B cell (primary cell): ENCODE measurements at regions of chr6 and their contacts with region 1.

Region 1: DNA sequence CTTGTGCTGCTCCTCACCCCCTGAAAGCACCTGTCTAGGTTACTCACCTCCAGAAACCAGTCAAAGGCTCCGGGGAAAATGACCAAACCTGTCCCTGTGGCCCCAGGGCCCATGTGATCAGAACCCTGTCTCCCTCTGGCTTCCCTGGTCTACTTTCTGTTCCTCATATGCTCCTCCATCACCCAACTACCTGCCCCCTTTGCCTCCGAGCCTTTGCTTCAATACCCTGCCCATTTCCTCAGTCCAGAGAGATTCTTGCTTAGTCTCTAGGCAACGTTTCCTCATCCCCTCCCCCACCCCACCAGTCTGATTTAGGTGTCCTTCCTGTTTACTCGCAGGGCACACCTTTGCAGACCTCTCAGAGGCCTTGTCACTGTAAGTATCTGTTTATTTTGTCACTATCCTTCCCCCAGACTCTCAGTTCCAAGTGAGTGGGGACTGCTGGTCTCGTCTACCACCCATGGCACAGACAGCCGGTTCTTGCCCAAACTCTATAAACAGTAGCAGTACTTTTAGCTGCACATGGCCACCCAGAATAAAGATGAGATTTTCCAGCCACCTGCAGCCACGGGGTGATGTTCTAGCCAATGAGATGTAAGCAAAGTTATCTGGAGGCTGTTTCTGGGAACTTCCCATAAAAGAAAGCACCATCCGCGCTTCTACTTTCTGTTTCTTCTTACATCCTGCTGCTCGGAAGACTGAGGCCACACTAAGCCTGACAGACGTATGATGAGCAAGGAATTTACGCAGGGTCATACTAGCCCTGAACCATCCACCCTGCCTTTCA is 13.3 kb downstream of the ELOVL5 start:
- DNase-seq: peak; percentile 93
- ATAC-seq: peak; percentile 88
- H3K4me3 ChIP-seq: peak overlapping the region; percentile 38 to 79 (median 58)
- H3K4me3 Mint-ChIP-seq: peak overlapping the region; percentile 80
- H3K27ac ChIP-seq: peak overlapping the region; percentile 98
- H3K27ac Mint-ChIP-seq: peak overlapping the region; percentile 97
- H3K4me1 ChIP-seq: peaks cover 81 to 89% of the 10 kb centered on the region in 2 donors
- H3K4me1 Mint-ChIP-seq: peaks cover 88% of the 10 kb centered on the region
- H3K27me3 ChIP-seq: no peaks in the 10 kb centered on the region
- H3K27me3 Mint-ChIP-seq: no peaks in the 10 kb centered on the region
- CTCF ChIP-seq: no peak

Region 2: DNA sequence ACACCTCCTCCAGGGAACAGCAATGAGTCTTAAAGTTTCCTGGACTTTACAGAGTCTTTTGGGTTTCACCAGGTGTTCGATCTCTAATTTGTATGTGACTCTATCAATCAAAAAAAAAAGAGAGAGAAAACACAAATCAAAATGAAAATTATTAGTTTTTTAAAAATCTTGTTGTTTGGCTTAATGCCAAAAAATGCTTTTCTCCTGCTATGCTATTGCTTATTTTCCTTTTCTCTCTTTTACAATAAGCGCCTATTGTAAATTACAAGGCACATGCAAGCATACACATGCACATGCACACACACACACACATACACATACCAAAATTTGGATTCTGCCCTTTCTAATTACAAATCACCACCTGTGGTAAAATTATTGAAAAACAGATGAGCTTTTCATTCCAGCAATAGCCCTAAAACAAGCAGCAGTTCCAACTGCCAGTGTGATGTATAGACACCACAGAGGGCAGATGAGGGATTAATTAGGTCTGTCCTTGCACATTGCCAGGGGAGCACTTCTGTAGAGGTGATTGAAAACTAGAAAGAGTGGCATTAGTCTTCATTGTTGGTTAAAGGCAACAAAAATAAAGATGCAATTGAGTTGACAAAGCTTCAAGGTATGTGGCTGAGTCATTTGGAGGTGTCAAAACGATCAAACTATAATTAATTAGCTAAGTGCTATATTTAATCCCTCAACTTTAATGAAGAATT is 1885.0 kb before region 1 on chr6:
- CTCF ChIA-PET with region 1: no interaction called
- POLR2A ChIA-PET with region 1: no interaction called
- intact Hi-C with region 1: no loop called
- DNase-seq: no peak
- ATAC-seq: no peak
- H3K4me3 ChIP-seq: no peak overlapping the region
- H3K4me3 Mint-ChIP-seq: no peak overlapping the region
- H3K27ac ChIP-seq: no peak overlapping the region
- H3K27ac Mint-ChIP-seq: no peak overlapping the region
- H3K4me1 ChIP-seq: no peaks in the 10 kb centered on the region
- H3K4me1 Mint-ChIP-seq: no peaks in the 10 kb centered on the region
- H3K27me3 ChIP-seq: no peaks in the 10 kb centered on the region
- H3K27me3 Mint-ChIP-seq: no peaks in the 10 kb centered on the region
- CTCF ChIP-seq: no peak

Region 3: DNA sequence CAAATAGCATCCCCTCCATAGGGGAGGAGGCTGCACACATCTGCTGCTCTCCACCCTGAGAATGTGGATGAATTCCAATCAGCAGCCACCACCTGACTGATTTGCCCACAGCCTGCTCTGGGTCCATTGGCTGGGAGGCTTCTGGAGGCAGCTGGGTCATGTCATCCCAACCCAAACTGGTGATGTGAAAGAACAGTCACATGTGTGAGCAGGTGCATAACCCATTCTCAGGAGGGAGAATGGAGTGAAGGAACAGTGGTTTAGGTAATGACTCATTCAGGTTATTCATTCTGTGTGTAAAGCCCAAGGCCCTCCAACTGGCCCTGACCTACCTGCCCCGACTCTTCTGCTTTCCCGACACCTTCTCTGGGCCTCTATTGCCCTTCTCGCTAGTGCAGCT is 95.9 kb before region 1 on chr6:
- CTCF ChIA-PET with region 1: no interaction called
- POLR2A ChIA-PET with region 1: no interaction called
- intact Hi-C with region 1: no loop called
- DNase-seq: no peak
- ATAC-seq: peak; percentile 21
- H3K4me3 ChIP-seq: peak overlapping the region in 1 of 5 experiments; percentile 59
- H3K4me3 Mint-ChIP-seq: peak overlapping the region; percentile 60
- H3K27ac ChIP-seq: peak overlapping the region in 1 of 2 donors; percentile 87
- H3K27ac Mint-ChIP-seq: peak overlapping the region; percentile 89
- H3K4me1 ChIP-seq: peaks cover 82% of the 10 kb centered on the region in 2 donors
- H3K4me1 Mint-ChIP-seq: peaks cover 86% of the 10 kb centered on the region
- H3K27me3 ChIP-seq: no peaks in the 10 kb centered on the region
- H3K27me3 Mint-ChIP-seq: no peaks in the 10 kb centered on the region
- CTCF ChIP-seq: no peak

Region 4: GRCh38 chr6:53300656-53301551 is 34.5 kb before region 1 on chr6:
- CTCF ChIA-PET with region 1: interaction called, 3 read pairs
- POLR2A ChIA-PET with region 1: no interaction called
- intact Hi-C with region 1: loop called (anchors 2 kb)
- DNase-seq: no peak
- ATAC-seq: peak; percentile 68
- H3K4me3 ChIP-seq: no peak overlapping the region
- H3K4me3 Mint-ChIP-seq: peak overlapping the region; percentile 71
- H3K27ac ChIP-seq: peak overlapping the region; percentile 8 to 82
- H3K27ac Mint-ChIP-seq: peak overlapping the region; percentile 89
- H3K4me1 ChIP-seq: peaks cover 74 to 79% of the 10 kb centered on the region in 2 donors
- H3K4me1 Mint-ChIP-seq: peaks cover 82% of the 10 kb centered on the region
- H3K27me3 ChIP-seq: no peaks in the 10 kb centered on the region
- H3K27me3 Mint-ChIP-seq: no peaks in the 10 kb centered on the region
- CTCF ChIP-seq: no peak

Region 5: GRCh38 chr6:53348371-53349208 is 13.2 kb after region 1 on chr6 and contains the start of gene ELOVL5:
- CTCF ChIA-PET with region 1: interaction called, 40 read pairs
- POLR2A ChIA-PET with region 1: interaction called, 36 read pairs
- intact Hi-C with region 1: loop called (anchors 1 kb)
- DNase-seq: peak; percentile 99
- ATAC-seq: peak; percentile 79
- H3K4me3 ChIP-seq: peak within 1 kb of the TSS; percentile 65 to 97 (median 86)
- H3K4me3 Mint-ChIP-seq: peak within 1 kb of the TSS; percentile 94
- H3K27ac ChIP-seq: peak within 1 kb of the TSS; percentile 84 to 91
- H3K27ac Mint-ChIP-seq: peak within 1 kb of the TSS; percentile 99
- H3K4me1 ChIP-seq: peaks cover 35 to 36% of the 10 kb centered on the region in 2 donors
- H3K4me1 Mint-ChIP-seq: peaks cover 59% of the 10 kb centered on the region
- H3K27me3 ChIP-seq: no peaks in the 10 kb centered on the region
- H3K27me3 Mint-ChIP-seq: no peaks in the 10 kb centered on the region
- CTCF ChIP-seq: no peak
- total RNA-seq, gene ELOVL5: 128 and 134 TPM in 2 replicates

Region 6: GRCh38 chr6:53366128-53366641 is 30.8 kb after region 1 on chr6:
- CTCF ChIA-PET with region 1: no interaction called
- POLR2A ChIA-PET with region 1: no interaction called
- intact Hi-C with region 1: no loop called
- DNase-seq: no peak
- ATAC-seq: no peak
- H3K4me3 ChIP-seq: no peak overlapping the region
- H3K4me3 Mint-ChIP-seq: no peak overlapping the region
- H3K27ac ChIP-seq: no peak overlapping the region
- H3K27ac Mint-ChIP-seq: no peak overlapping the region
- H3K4me1 ChIP-seq: peaks cover 6 to 8% of the 10 kb centered on the region in 2 donors
- H3K4me1 Mint-ChIP-seq: peaks cover 11% of the 10 kb centered on the region
- H3K27me3 ChIP-seq: no peaks in the 10 kb centered on the region
- H3K27me3 Mint-ChIP-seq: no peaks in the 10 kb centered on the region
- CTCF ChIP-seq: no peak